ENCODE measurements at regions of chr19 and their contacts with region 1.

Region 1: DNA sequence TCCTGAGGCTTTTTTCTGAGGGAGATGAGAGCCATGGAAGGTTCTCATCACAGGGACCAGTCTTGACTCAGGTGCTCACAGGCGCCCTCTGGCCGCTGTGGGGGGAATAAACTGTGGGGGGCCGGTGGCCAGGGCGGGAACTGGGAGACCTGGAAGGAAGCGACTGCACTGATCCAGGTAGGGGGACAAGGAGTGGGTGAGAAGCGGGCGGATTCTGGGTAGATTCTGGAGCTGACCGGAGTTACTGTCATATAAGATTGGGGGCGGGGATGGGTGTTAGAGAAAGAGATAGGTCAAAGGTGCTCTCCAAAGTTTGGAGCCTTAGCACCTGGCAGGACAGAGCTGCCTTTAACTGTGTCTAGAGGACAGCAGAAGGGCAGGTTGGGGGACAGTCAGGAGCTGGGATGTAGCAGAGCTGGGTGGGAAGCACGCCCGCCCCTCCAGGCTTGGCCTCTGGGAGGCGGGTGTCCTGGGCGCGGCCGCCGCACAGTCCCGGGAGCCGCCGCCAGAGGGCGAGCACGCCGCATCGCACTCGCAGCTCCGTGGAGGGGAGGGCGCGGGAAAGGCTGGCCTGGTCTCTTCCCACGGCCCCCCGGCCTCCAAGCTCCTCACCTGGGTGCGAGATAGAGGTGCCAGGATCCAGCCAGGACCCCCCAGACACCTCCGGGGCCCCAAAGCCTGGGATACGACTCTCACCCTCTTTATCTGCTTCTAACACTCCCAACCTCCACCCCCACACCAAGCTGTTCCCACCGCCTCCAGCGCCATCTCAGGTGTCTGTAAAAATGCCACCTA is 4.2 kb upstream of the DAND5 start:
- DNase-seq: peak; percentile 82
- H3K4me3 Mint-ChIP-seq: peak overlapping the region; percentile 75
- H3K27ac Mint-ChIP-seq: peak overlapping the region; percentile 80
- H3K4me1 Mint-ChIP-seq: peaks cover 8% of the 10 kb centered on the region
- H3K27me3 Mint-ChIP-seq: no peaks in the 10 kb centered on the region

Region 2: DNA sequence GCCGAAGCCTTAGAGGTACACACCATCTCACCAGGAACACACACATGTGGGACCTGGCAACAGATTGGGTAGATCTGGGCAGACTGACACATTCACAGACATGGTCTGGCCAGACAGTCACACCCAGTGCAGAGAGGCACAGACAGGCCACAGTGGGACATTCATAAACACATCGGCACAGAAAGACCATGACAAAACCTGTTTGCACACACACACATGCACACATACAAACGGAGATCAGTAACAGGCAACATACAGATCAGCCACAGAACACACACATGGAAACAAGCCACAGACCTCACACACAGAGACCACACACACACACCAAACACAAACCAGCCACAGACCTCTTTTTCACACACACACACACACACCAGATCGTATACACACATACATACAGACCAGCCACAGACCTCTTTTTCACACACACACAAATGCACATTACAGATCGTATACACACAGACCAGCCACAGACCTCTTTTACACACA is 180.2 kb before region 1 on chr19:
- CTCF ChIA-PET with region 1: no interaction called
- POLR2A ChIA-PET with region 1: no interaction called
- DNase-seq: peak; percentile 54
- H3K4me3 Mint-ChIP-seq: no peak overlapping the region
- H3K27ac Mint-ChIP-seq: no peak overlapping the region
- H3K4me1 Mint-ChIP-seq: peaks cover 39% of the 10 kb centered on the region
- H3K27me3 Mint-ChIP-seq: no peaks in the 10 kb centered on the region

Region 3: GRCh38 chr19:12881172-12881808 is 83.9 kb before region 1 on chr19 and contains the start of gene DNASE2:
- CTCF ChIA-PET with region 1: interaction called, 18 read pairs
- POLR2A ChIA-PET with region 1: interaction called, 6 read pairs
- DNase-seq: peak; percentile 95
- H3K4me3 Mint-ChIP-seq: peak within 1 kb of the TSS; percentile 79
- H3K27ac Mint-ChIP-seq: peak within 1 kb of the TSS; percentile 90
- H3K4me1 Mint-ChIP-seq: peaks cover 33% of the 10 kb centered on the region
- H3K27me3 Mint-ChIP-seq: peaks cover 1% of the 10 kb centered on the region
- total RNA-seq, gene DNASE2: 28.8 to 30.0 TPM

Region 4: GRCh38 chr19:12945479-12946091 is 19.6 kb before region 1 on chr19 and contains the start of gene RAD23A:
- CTCF ChIA-PET with region 1: interaction called, 31 read pairs
- POLR2A ChIA-PET with region 1: no interaction called
- DNase-seq: peak; percentile 98
- H3K4me3 Mint-ChIP-seq: peak within 1 kb of the TSS; percentile 95
- H3K27ac Mint-ChIP-seq: peak within 1 kb of the TSS; percentile 96
- H3K4me1 Mint-ChIP-seq: peaks cover 60% of the 10 kb centered on the region
- H3K27me3 Mint-ChIP-seq: no peaks in the 10 kb centered on the region
- total RNA-seq, gene RAD23A: 120 to 131 TPM

Region 5: DNA sequence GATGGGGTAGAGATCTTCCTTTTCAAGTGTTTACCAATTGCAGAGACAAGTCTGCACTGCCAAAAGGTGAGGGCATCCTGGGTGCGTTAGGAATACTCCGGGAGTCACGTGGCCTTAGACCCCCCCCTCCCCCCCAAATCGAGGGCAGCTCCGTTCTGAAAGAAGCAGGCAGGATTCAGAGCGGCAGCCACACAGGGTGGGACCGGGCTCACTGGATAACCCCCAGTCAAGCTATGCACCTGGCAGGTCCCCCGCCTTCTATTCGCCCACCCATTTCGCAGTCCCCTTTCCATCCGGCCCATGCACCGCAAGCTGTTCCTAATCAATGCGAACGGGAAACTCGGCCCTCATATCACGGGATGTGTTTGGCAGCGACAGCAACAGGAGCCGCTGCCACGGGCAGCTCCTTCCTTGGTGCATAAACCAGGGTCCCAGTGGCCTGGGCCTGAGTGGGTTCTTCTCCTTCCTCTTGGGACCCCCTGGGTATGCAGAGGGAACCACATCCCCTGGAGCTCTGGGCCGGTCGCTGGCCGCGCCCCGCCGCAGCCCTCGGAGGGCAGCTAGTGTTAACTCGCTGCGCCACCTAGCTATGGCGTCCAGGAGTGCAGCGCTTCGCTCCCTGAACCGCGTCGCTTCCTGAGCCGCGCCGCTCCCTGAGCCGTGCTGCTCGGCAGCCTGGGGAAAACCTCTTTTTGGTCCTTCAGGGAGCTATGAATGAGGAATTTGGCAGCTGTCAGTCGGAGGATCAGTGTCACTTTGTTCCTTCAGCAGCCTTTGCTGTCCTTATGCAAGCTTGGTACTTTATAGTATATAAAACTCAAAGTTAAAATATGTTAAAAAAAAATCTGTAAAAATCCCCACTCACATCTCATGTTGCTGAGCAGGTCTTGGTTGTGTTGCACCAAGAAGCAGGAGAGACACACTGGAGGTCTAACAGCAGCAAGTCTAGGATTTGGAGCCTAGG is 96.0 kb after region 1 on chr19:
- CTCF ChIA-PET with region 1: interaction called, 25 read pairs
- POLR2A ChIA-PET with region 1: no interaction called
- DNase-seq: peak; percentile 79
- H3K4me3 Mint-ChIP-seq: peak overlapping the region; percentile 58
- H3K27ac Mint-ChIP-seq: no peak overlapping the region
- H3K4me1 Mint-ChIP-seq: peaks cover 9% of the 10 kb centered on the region
- H3K27me3 Mint-ChIP-seq: peaks cover 26% of the 10 kb centered on the region

Region 6: GRCh38 chr19:13093407-13094105 is 128.3 kb after region 1 on chr19:
- CTCF ChIA-PET with region 1: interaction called, 25 read pairs
- POLR2A ChIA-PET with region 1: no interaction called
- DNase-seq: peak; percentile 84
- H3K4me3 Mint-ChIP-seq: no peak overlapping the region
- H3K27ac Mint-ChIP-seq: no peak overlapping the region
- H3K4me1 Mint-ChIP-seq: peaks cover 23% of the 10 kb centered on the region
- H3K27me3 Mint-ChIP-seq: peaks cover 38% of the 10 kb centered on the region

Region 7: DNA sequence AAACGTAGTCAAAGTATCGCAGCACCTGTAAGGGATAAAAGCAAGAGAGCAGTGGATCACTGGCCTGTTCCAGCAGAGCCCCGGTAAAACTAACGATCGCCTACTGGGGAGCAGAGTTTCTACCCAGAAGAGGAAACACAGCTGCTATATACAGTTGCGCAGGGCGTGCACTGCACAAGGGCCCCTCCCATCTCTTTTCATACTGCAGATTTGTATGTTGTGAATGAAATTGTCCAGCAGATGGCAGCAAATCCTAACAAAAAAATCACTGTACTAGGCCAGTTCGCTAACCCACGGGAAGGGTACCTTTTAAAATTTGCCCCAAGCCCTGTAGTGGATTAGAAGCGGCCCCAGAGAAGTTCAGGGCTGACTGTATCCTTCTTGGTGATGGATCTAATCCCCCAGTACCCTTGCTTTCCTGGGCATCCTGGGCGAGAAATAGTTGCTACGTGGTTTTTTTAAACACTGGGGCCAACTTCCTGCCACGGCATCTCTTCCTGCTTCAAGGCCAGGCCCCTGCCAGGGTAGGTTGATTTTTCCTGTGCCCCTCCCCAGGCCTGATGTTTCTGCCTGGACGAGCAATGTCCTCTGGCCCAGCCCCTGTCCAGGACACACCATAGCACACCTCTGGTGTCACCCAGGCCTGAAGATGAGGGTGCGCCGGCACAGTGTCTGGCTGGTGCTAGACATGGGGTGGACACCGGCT is 312.0 kb after region 1 on chr19:
- CTCF ChIA-PET with region 1: no interaction called
- POLR2A ChIA-PET with region 1: no interaction called
- DNase-seq: peak; percentile 85
- H3K4me3 Mint-ChIP-seq: peak overlapping the region; percentile 55
- H3K27ac Mint-ChIP-seq: peak overlapping the region; percentile 95
- H3K4me1 Mint-ChIP-seq: peaks cover 25% of the 10 kb centered on the region
- H3K27me3 Mint-ChIP-seq: peaks cover 5% of the 10 kb centered on the region